ENCODE measurements at regions of chr16 and their contacts with region 1.

Region 1: GRCh38 chr16:85717393-85718121 is 28.8 kb upstream of the GINS2 start:
- DNase-seq: peak in 13 of 14 experiments; percentile 30 to 78 (median 42)
- ATAC-seq: no peak
- H3K4me3 ChIP-seq: no peak overlapping the region
- H3K4me3 Mint-ChIP-seq: no peak overlapping the region
- H3K27ac ChIP-seq: no peak overlapping the region
- H3K27ac Mint-ChIP-seq: no peak overlapping the region
- H3K4me1 ChIP-seq: peaks cover 25% of the 10 kb centered on the region
- H3K4me1 Mint-ChIP-seq: peaks cover 13% of the 10 kb centered on the region
- H3K27me3 ChIP-seq: peaks cover 0 to 3% of the 10 kb centered on the region in 2 experiments
- H3K27me3 Mint-ChIP-seq: no peaks in the 10 kb centered on the region
- CTCF ChIP-seq: peak; percentile 72

Region 2: GRCh38 chr16:85305996-85306792 is 411.4 kb before region 1 on chr16:
- CTCF ChIA-PET with region 1: no interaction called
- POLR2A ChIA-PET with region 1: no interaction called
- intact Hi-C with region 1: loop called in 1 of 2 experiments (anchors 5 kb)
- DNase-seq: peak; percentile 62 to 91 (median 78)
- ATAC-seq: peak; percentile 88
- H3K4me3 ChIP-seq: no peak overlapping the region
- H3K4me3 Mint-ChIP-seq: peak overlapping the region; percentile 35
- H3K27ac ChIP-seq: peak overlapping the region in 1 of 2 donors; percentile 41
- H3K27ac Mint-ChIP-seq: peak overlapping the region; percentile 86
- H3K4me1 ChIP-seq: peaks cover 80% of the 10 kb centered on the region
- H3K4me1 Mint-ChIP-seq: peaks cover 61% of the 10 kb centered on the region
- H3K27me3 ChIP-seq: peaks cover 0 to 5% of the 10 kb centered on the region in 2 experiments
- H3K27me3 Mint-ChIP-seq: no peaks in the 10 kb centered on the region
- CTCF ChIP-seq: no peak

Region 3: GRCh38 chr16:85369741-85370528 is 347.6 kb before region 1 on chr16:
- CTCF ChIA-PET with region 1: no interaction called
- POLR2A ChIA-PET with region 1: no interaction called
- intact Hi-C with region 1: loop called in 1 of 2 experiments (anchors 2 kb)
- DNase-seq: peak; percentile 16 to 59 (median 34)
- ATAC-seq: peak; percentile 59
- H3K4me3 ChIP-seq: no peak overlapping the region
- H3K4me3 Mint-ChIP-seq: no peak overlapping the region
- H3K27ac ChIP-seq: no peak overlapping the region
- H3K27ac Mint-ChIP-seq: no peak overlapping the region
- H3K4me1 ChIP-seq: no peaks in the 10 kb centered on the region
- H3K4me1 Mint-ChIP-seq: no peaks in the 10 kb centered on the region
- H3K27me3 ChIP-seq: peaks cover 0 to 2% of the 10 kb centered on the region in 2 experiments
- H3K27me3 Mint-ChIP-seq: no peaks in the 10 kb centered on the region
- CTCF ChIP-seq: peak; percentile 77

Region 4: DNA sequence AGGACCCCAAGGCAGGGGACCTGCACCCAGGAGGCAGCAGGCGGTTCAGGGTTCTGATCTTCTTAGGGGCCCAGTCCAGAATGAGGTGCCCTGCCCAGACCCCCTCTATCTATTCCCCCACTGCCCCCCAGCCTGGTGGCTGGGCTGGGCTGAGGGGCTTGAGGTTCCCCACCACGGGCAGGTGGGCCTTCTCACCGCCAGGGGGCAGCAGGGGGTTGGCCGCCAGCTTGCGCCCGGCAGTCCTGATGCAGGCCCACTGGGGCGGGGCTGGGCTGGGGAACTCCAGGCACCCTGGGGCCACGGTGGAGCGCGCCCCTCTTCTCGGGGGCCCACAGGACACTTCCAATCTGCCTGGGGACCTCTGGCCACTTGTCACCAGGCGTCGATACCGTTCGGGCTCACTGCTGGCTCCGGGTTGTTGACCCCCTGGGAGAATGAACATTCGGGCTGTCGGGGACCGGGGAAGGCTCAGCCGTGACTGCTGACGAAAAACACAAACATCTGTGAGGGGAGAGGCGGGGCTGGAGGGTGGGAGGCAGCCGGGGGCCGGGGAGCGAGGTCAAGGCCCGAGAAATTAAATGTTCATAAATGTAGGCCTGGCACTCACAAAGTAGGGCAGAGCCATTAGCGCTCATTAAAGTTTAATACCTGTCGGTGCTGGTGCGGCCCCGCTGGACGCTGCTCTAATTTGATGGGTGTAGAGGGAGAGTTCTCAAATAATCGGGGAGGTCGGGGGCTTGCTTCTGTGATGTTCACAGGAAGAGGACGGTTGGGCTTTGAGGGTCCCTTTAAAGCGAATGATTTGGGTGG is 323.7 kb before region 1 on chr16:
- CTCF ChIA-PET with region 1: no interaction called
- POLR2A ChIA-PET with region 1: no interaction called
- intact Hi-C with region 1: loop called (anchors 2 kb)
- DNase-seq: peak; percentile 40 to 78 (median 55)
- ATAC-seq: peak; percentile 52
- H3K4me3 ChIP-seq: no peak overlapping the region
- H3K4me3 Mint-ChIP-seq: no peak overlapping the region
- H3K27ac ChIP-seq: no peak overlapping the region
- H3K27ac Mint-ChIP-seq: no peak overlapping the region
- H3K4me1 ChIP-seq: no peaks in the 10 kb centered on the region
- H3K4me1 Mint-ChIP-seq: no peaks in the 10 kb centered on the region
- H3K27me3 ChIP-seq: no peaks in the 10 kb centered on the region
- H3K27me3 Mint-ChIP-seq: no peaks in the 10 kb centered on the region
- CTCF ChIP-seq: peak; percentile 78

Region 5: DNA sequence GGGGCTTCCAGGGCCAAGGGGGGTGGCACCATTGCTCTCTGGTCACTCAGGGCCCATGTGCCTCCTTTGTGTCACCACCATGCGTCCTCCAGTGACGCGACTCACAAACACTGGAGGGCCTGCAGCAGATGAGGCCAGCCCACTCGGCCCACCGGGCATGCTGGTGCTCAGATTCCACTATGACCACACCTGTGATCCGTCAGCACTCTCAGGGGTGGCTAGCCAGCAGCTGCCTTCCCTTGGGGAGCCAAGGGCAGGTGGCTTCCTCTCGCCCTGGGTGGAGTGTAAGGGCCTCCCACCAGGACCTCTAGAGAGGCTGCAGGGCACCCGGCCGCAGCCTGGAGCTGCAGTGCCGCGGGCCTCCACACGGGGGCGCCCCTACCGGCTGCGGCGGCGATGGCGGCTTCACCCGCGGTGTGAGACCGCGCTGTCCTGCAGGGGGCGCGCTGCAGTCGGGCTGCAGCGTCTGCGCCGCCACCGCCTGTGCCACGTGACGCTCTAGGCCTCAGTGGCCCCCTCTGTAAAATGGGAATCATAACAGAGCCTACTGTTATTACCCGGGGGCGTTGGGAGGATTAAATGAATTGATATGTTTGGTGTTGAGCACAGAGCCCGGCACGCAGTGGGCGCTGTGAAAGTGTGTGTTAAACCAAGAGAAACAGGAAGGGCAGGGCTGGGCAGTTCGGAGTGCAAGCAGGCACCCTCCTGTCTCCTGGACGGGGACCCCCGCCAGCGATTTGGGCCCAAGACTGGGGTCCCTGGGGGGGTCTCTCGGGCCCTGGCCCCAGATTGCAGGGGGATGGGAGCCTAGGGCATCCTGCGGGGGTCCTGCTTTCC is 296.8 kb before region 1 on chr16:
- CTCF ChIA-PET with region 1: no interaction called
- POLR2A ChIA-PET with region 1: no interaction called
- intact Hi-C with region 1: loop called in 1 of 2 experiments (anchors 5 kb)
- DNase-seq: peak; percentile 50 to 89 (median 71)
- ATAC-seq: peak; percentile 86
- H3K4me3 ChIP-seq: no peak overlapping the region
- H3K4me3 Mint-ChIP-seq: no peak overlapping the region
- H3K27ac ChIP-seq: no peak overlapping the region
- H3K27ac Mint-ChIP-seq: no peak overlapping the region
- H3K4me1 ChIP-seq: peaks cover 15% of the 10 kb centered on the region
- H3K4me1 Mint-ChIP-seq: no peaks in the 10 kb centered on the region
- H3K27me3 ChIP-seq: no peaks in the 10 kb centered on the region
- H3K27me3 Mint-ChIP-seq: no peaks in the 10 kb centered on the region
- CTCF ChIP-seq: peak; percentile 100

Region 6: DNA sequence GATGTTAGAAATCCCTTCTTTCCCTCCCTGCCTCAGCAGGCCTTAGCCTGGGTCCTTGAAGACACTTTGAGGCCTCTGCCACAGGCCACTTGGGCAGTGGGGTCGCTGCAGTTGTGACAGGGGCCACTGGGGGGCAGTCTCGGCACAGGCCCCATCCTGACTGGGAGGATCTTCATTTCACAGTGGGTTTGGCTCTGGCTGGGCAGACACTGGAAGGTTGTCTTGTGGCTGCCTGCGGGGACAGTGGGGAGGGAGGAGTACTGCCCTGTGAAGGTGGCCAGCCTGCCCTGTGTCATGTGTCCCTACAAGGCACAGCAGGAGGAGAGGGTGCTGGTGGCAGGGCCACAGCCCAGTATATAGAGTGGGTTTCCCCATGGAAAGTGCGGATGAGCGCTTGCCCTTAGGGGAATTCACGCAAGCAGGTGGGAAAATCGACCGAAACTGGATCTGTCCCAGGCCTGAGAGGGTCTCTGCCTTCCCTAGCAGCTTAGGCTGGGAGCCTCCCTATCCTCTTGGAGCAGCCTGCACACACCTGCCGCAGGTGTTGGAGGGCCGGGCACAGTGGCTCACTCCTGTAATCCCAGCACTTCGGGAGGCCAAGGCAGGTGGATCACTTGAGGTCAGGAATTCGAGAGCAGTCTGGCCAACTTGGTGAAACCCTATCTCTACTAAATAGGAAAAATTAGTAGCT is 57.6 kb before region 1 on chr16:
- CTCF ChIA-PET with region 1: no interaction called
- POLR2A ChIA-PET with region 1: no interaction called
- intact Hi-C with region 1: loop called (anchors 1 to 5 kb)
- DNase-seq: peak; percentile 38 to 71 (median 54)
- ATAC-seq: peak; percentile 74
- H3K4me3 ChIP-seq: no peak overlapping the region
- H3K4me3 Mint-ChIP-seq: no peak overlapping the region
- H3K27ac ChIP-seq: no peak overlapping the region
- H3K27ac Mint-ChIP-seq: no peak overlapping the region
- H3K4me1 ChIP-seq: no peaks in the 10 kb centered on the region
- H3K4me1 Mint-ChIP-seq: no peaks in the 10 kb centered on the region
- H3K27me3 ChIP-seq: no peaks in the 10 kb centered on the region
- H3K27me3 Mint-ChIP-seq: no peaks in the 10 kb centered on the region
- CTCF ChIP-seq: peak; percentile 77

Region 7: GRCh38 chr16:85688586-85689284 is 28.8 kb before region 1 on chr16 and contains the start of gene GINS2:
- CTCF ChIA-PET with region 1: no interaction called
- POLR2A ChIA-PET with region 1: no interaction called
- intact Hi-C with region 1: loop called in 1 of 2 experiments (anchors 1 kb)
- DNase-seq: peak; percentile 80 to 95 (median 88)
- ATAC-seq: peak; percentile 99
- H3K4me3 ChIP-seq: peak within 1 kb of the TSS; percentile 57
- H3K4me3 Mint-ChIP-seq: peak within 1 kb of the TSS; percentile 91
- H3K27ac ChIP-seq: no peak within 1 kb of the TSS
- H3K27ac Mint-ChIP-seq: peak within 1 kb of the TSS; percentile 61
- H3K4me1 ChIP-seq: peaks cover 26% of the 10 kb centered on the region
- H3K4me1 Mint-ChIP-seq: no peaks in the 10 kb centered on the region
- H3K27me3 ChIP-seq: peaks cover 0 to 2% of the 10 kb centered on the region in 2 experiments
- H3K27me3 Mint-ChIP-seq: peaks cover 6% of the 10 kb centered on the region
- CTCF ChIP-seq: no peak
- total RNA-seq, gene GINS2: 1.1 to 1.4 TPM

Region 8: GRCh38 chr16:85759631-85760419 is 42.3 kb after region 1 on chr16:
- CTCF ChIA-PET with region 1: no interaction called
- POLR2A ChIA-PET with region 1: no interaction called
- intact Hi-C with region 1: no loop called
- DNase-seq: peak in 9 of 14 experiments; percentile 6 to 51 (median 17)
- ATAC-seq: no peak
- H3K4me3 ChIP-seq: no peak overlapping the region
- H3K4me3 Mint-ChIP-seq: no peak overlapping the region
- H3K27ac ChIP-seq: no peak overlapping the region
- H3K27ac Mint-ChIP-seq: no peak overlapping the region
- H3K4me1 ChIP-seq: peaks cover 11% of the 10 kb centered on the region
- H3K4me1 Mint-ChIP-seq: peaks cover 8% of the 10 kb centered on the region
- H3K27me3 ChIP-seq: peaks cover 0 to 10% of the 10 kb centered on the region in 2 experiments
- H3K27me3 Mint-ChIP-seq: peaks cover 27% of the 10 kb centered on the region
- CTCF ChIP-seq: peak; percentile 39